CD4-positive, alpha-beta memory T cell (primary cell): ENCODE measurements at regions of chr9 and their contacts with region 1.

Region 1: DNA sequence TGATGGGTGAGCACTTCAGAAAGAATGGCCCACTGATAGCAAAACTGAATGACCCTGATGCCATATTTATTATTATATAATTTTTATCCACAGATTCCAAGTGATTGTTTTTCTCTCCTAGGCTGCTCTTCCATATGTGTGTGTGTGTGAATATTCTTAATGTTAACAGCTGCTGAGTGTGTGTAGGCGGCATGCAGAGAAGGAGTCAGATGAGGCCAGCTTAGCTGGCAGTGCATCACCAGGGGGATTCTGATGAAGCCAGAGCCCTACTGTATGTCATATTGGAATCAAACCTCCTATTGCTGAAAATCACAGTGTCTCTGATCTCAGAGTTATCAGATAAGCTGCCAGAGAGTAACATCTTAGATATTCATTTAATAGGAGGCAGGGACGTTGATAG is 177.1 kb downstream of the DMAC1 start:
- DNase-seq: no peak
- H3K4me3 ChIP-seq: no peak overlapping the region
- H3K4me3 Mint-ChIP-seq: no peak overlapping the region
- H3K27ac ChIP-seq: no peak overlapping the region
- H3K27ac Mint-ChIP-seq: no peak overlapping the region
- H3K4me1 ChIP-seq: peaks cover 14% of the 10 kb centered on the region
- H3K4me1 Mint-ChIP-seq: peaks cover 14 to 23% (median 18%) of the 10 kb centered on the region in 4 donors
- H3K27me3 ChIP-seq: no peaks in the 10 kb centered on the region
- H3K27me3 Mint-ChIP-seq: no peaks in the 10 kb centered on the region

Region 2: DNA sequence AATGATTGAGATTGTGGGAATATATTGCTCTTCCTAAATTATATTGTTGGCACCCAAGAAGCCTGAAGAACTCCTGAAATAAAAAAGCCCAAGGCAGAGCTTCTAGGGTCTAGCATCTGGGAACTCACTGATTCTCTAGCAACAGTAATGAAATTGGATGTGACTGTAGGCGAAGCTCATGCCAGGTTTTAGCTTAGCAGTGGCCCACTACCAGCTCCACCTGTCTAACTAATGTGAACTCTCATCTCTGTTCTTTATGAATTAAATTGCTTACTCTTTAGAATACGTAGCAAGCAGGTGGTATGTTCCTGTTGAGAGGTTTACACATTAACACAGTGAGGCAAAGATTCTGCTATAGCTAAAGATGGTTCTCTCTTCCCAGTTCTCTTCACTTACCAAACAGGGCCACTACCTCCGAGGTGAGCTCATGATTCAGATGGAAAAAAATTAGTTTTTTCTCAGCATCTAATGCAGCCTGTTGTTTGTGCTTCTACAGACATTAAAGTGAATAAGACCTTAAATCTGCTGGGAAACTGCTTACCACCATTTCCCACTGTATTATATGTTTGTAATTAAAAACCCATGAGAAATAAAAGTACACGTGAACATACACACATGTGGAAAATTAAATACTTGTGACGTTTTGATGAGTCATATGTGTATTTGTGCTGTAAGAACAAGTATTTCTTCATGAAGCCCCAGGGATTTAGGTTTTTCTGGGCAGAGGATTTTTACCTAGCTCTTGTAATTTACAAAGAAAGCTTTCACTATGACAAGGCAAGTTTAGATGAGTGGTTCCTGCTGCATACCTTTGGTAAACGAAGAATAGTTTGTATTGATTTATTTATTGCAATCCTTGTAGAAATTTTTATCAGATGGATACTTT is 504.6 kb before region 1 on chr9:
- CTCF ChIA-PET with region 1: no interaction called
- POLR2A ChIA-PET with region 1: no interaction called
- intact Hi-C with region 1: no loop called
- DNase-seq: no peak
- H3K4me3 ChIP-seq: no peak overlapping the region
- H3K4me3 Mint-ChIP-seq: no peak overlapping the region
- H3K27ac ChIP-seq: no peak overlapping the region
- H3K27ac Mint-ChIP-seq: no peak overlapping the region
- H3K4me1 ChIP-seq: peaks cover 4% of the 10 kb centered on the region
- H3K4me1 Mint-ChIP-seq: peaks cover 19 to 53% (median 40%) of the 10 kb centered on the region in 4 donors
- H3K27me3 ChIP-seq: no peaks in the 10 kb centered on the region
- H3K27me3 Mint-ChIP-seq: no peaks in the 10 kb centered on the region

Region 3: GRCh38 chr9:7394007-7394774 is 228.3 kb before region 1 on chr9:
- CTCF ChIA-PET with region 1: no interaction called
- POLR2A ChIA-PET with region 1: no interaction called
- intact Hi-C with region 1: no loop called
- DNase-seq: no peak
- H3K4me3 ChIP-seq: no peak overlapping the region
- H3K4me3 Mint-ChIP-seq: no peak overlapping the region
- H3K27ac ChIP-seq: no peak overlapping the region
- H3K27ac Mint-ChIP-seq: no peak overlapping the region
- H3K4me1 ChIP-seq: no peaks in the 10 kb centered on the region
- H3K4me1 Mint-ChIP-seq: no peaks in the 10 kb centered on the region
- H3K27me3 ChIP-seq: no peaks in the 10 kb centered on the region
- H3K27me3 Mint-ChIP-seq: peaks cover 4% of the 10 kb centered on the region in 2 donors

Region 4: DNA sequence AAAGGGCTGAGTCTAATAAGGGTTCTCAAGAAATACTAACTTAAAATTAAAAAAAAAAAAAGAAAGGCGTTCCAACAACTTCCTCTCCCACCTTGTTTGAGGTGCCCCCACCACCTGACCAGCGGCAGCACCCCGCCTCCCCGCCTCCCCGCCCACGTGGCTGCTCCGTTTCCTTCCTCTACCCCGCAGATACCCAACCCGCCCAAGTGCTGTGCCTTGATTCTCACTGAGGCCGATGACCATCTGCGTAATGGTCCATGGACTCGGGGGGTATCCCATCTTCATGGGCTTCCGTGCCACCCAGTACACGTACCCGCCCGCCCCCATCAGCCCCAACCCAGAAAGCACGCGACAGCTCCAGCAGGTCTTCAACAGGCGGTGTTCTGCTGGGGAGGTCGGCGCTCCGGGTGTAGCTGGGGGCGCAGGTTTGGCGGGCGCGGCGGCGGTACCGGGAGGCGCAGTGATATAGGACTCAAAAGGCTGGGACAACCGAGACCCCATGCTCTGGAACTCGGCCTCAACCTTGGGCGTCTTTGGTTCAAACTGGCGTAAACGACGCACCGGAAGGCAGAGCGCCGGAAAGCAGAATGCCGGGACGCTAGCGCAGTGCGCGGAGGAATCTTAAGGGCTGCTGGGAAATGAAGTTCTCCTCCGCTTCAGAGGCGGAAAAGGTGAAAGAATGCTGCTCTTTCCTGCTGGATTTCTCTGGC is 176.9 kb after region 1 on chr9 and contains the start of gene DMAC1:
- CTCF ChIA-PET with region 1: no interaction called
- POLR2A ChIA-PET with region 1: no interaction called
- intact Hi-C with region 1: loop called (anchors 5 kb)
- DNase-seq: peak; percentile 72 to 81 (median 77)
- H3K4me3 ChIP-seq: peak within 1 kb of the TSS; percentile 27 to 92
- H3K4me3 Mint-ChIP-seq: peak within 1 kb of the TSS; percentile 92 to 99 (median 95)
- H3K27ac ChIP-seq: peak within 1 kb of the TSS; percentile 88
- H3K27ac Mint-ChIP-seq: peak within 1 kb of the TSS; percentile 94 to 96 (median 96)
- H3K4me1 ChIP-seq: peaks cover 25% of the 10 kb centered on the region
- H3K4me1 Mint-ChIP-seq: peaks cover 17 to 55% (median 25%) of the 10 kb centered on the region in 4 donors
- H3K27me3 ChIP-seq: no peaks in the 10 kb centered on the region
- H3K27me3 Mint-ChIP-seq: no peaks in the 10 kb centered on the region
- total RNA-seq, gene DMAC1: 30.8 to 38.0 TPM